Astrocyte of the cerebellum (primary cell): ENCODE measurements at regions of chr15 and their contacts with region 1.

Region 1: GRCh38 chr15:54941417-54941816 is 255.3 kb downstream of the RSL24D1 start:
- DNase-seq: no peak
- H3K4me3 ChIP-seq: no peak overlapping the region
- CTCF ChIP-seq: no peak

Region 2: DNA sequence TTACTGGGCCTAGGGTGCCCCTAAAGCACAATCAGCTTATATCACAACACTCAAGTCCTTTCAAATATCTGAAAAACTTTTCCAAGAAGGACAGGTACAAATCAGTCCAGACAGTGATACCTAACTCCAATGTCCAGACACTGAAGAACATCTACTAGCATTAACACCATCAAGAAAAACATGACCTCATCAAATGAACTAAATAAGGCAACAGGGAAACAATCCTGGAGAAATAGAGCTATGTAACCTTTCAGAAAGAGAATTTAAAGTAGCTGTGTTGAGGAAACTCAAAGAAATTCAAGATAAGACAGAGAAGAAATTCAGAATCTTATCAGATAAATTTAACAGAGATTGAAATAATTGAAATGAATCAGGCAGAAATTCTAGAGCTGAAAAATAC is 32.2 kb before region 1 on chr15:
- in situ Hi-C with region 1: loop called (anchors 5 kb)
- DNase-seq: no peak
- H3K4me3 ChIP-seq: no peak overlapping the region
- CTCF ChIP-seq: no peak

Region 3: DNA sequence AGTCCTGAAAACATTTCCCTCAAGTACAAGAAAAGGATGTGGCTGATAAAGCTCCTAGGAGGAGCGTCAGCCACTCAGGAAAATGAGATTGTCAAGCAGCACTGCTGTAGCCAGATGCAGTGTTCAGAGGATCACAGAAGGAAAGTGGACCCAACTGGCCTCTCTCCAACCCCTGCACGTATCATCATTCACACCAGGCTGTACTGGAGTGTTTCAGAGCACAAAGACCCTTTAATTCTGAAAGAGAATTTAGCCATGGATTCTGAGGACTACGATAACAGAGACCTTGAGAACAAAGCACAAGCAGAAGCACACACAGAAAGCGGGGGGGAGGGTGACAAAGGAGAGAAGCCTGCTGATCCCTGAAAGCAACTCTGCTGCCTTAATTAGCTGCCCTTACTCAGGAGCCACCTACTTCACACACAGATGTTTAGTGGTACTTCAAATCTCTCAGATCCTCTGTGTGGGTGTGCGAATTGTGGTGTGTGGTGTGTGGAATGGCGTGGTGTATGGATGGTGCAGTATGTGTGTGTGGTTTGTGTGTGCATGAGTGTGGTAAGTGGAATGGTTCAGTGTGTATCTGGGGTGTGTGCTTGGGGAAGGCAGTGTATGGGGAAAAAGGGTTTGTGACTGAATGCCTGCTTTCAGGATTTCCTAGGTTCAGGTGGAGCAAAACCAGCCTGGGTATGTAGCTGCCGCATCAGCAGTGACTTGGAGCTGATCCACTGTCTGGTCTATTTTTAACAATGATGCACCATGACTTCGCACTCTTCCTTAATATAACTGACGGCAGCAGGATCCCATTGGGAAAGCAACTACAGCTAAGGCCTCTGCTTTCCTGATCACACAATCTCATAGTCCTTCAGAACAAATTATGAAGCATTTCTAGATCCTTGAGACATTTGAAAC is 62.8 kb after region 1 on chr15:
- in situ Hi-C with region 1: loop called (anchors 5 kb)
- DNase-seq: no peak
- H3K4me3 ChIP-seq: no peak overlapping the region
- CTCF ChIP-seq: no peak